ENCODE measurements at regions of chr19 and their contacts with region 1.

Region 1: GRCh38 chr19:41397086-41398049 is at the starts of genes BCKDHA and EXOSC5:
- DNase-seq: peak; percentile 99
- H3K4me3 Mint-ChIP-seq: peak within 1 kb of the TSS; percentile 96
- H3K27ac Mint-ChIP-seq: peak within 1 kb of the TSS; percentile 98
- H3K4me1 Mint-ChIP-seq: peaks cover 41% of the 10 kb centered on the region
- H3K27me3 Mint-ChIP-seq: no peaks in the 10 kb centered on the region
- total RNA-seq, gene BCKDHA: 17.4 to 23.2 TPM
- total RNA-seq, gene EXOSC5: 43.0 to 45.5 TPM

Region 2: DNA sequence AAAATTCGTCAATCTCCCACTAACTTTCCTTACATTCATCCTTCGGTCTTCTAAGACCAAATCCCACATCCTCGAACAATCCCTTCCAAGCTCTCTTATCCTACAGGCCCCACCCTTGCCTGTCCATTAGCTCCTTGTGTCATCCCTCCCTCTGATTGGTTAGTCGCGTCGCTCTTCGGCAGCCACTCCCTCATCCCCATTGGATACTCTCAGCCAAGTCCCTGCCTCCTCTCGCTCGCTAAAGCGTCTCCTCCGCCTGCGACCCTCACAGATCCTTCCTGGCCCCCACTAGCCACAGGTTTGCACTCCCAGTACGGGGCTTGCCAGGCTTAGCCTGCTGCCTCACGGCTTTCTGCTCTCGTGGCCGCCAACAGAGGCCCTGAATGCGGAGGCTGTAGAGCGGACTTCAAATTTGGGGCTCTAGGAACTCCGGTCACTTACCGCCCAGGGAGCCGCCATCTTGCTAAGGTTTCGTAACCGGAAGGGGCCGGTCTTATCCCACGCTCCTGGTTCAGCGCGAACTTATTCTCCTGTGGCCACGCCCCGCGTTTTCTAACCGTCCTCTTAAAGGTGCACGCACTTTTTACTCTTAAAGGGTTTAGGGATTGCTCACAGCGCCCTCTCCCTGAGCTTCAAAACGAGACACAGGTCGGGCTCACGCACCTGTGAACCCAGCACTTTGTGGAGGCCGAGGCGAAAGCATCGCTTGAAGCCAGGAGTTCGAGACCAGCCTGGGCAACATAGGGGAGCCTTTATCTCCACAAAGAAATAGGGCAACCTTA is 42.3 kb after region 1 on chr19 and contains the start of gene DMAC2:
- CTCF ChIA-PET with region 1: interaction called, 4 read pairs
- POLR2A ChIA-PET with region 1: no interaction called
- intact Hi-C with region 1: loop called (anchors 1 kb)
- DNase-seq: peak; percentile 98
- H3K4me3 Mint-ChIP-seq: no peak within 1 kb of the TSS
- H3K27ac Mint-ChIP-seq: no peak within 1 kb of the TSS
- H3K4me1 Mint-ChIP-seq: peaks cover 15% of the 10 kb centered on the region
- H3K27me3 Mint-ChIP-seq: no peaks in the 10 kb centered on the region
- total RNA-seq, gene DMAC2: 47.5 to 47.8 TPM

Region 3: GRCh38 chr19:41500443-41500842 is 103.1 kb after region 1 on chr19:
- CTCF ChIA-PET with region 1: no interaction called
- POLR2A ChIA-PET with region 1: no interaction called
- intact Hi-C with region 1: no loop called
- DNase-seq: no peak
- H3K4me3 Mint-ChIP-seq: no peak overlapping the region
- H3K27ac Mint-ChIP-seq: no peak overlapping the region
- H3K4me1 Mint-ChIP-seq: no peaks in the 10 kb centered on the region
- H3K27me3 Mint-ChIP-seq: peaks cover 34% of the 10 kb centered on the region

Measured in activated CD4-positive, alpha-beta memory T cell treated with anti-CD3 and anti-CD28 coated beads for 36 hours (primary cell).